ENCODE measurements at regions of chr11 and their contacts with region 1.

Region 1: DNA sequence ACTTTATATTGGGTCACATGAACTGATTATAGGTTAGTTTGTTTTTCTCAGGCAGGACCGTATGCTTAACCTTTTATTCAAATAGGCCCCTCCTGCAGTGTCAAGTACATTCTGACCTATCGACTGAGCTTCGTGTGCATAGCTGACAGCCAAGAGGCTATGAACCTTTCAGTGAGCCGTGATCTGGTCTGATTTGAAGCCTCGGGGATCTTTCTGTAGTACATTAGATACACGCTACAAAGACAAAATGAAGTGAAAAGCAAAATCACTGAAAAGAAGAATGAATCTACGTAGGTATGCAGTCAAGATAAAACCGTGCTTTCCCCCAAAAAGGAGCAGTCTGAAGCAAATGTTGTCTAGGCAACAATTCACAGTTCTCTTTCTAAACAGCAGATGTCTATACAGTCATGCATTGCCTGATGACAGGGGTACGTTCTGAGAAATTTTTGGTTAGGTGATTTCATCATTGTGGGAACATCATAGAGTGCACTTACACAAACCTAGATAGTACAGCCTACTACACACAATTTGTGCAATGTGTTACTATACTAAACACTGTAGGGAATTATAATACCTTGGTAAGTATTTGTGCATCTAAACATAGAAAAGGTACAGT is 18.1 kb downstream of the JHY start:
- DNase-seq: no peak
- ATAC-seq: peak; percentile 87
- H3K4me3 ChIP-seq: no peak overlapping the region
- H3K27ac ChIP-seq: no peak overlapping the region
- H3K4me1 ChIP-seq: no peaks in the 10 kb centered on the region
- H3K27me3 ChIP-seq: no peaks in the 10 kb centered on the region
- CTCF ChIP-seq: no peak
- EP300 ChIP-seq: no peak
- POLR2A ChIP-seq: no peak
- RAD21 ChIP-seq: peak; percentile 39; the same call in 1 of the 2 replicates

Region 2: DNA sequence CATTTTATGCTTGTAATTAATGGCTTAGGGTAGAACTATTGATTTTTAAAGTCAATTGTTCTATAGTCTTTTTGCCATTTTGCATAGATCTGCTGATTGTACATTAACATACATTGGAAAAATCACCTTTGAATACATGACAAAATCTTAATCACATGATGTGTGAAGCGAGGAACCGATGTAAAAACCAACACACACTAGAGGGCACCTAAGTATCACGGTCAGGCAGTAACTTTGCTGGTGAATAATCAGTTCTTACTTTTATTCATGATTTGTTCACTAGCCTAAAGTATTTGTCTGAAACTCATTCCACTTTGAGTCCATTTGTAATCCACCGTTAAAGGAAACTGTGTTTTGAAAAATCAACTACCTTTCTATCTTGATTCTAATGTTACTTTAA is 10.1 kb after region 1 on chr11:
- CTCF ChIA-PET with region 1: interaction called, 6 read pairs
- POLR2A ChIA-PET with region 1: no interaction called
- RAD21 ChIA-PET with region 1: no interaction called
- SMC1A ChIA-PET with region 1: interaction called, 11 read pairs
- in situ Hi-C with region 1: no loop called
- intact Hi-C with region 1: no loop called
- DNase-seq: no peak
- ATAC-seq: peak; percentile 70
- H3K4me3 ChIP-seq: no peak overlapping the region
- H3K27ac ChIP-seq: no peak overlapping the region
- H3K4me1 ChIP-seq: no peaks in the 10 kb centered on the region
- H3K27me3 ChIP-seq: no peaks in the 10 kb centered on the region
- CTCF ChIP-seq: peak; percentile 8 to 52 (median 14); a peak in 3 of 6 replicates
- EP300 ChIP-seq: no peak
- POLR2A ChIP-seq: no peak
- RAD21 ChIP-seq: peak; percentile 55

Region 3: GRCh38 chr11:123006860-123007542 is 106.3 kb after region 1 on chr11:
- CTCF ChIA-PET with region 1: no interaction called
- POLR2A ChIA-PET with region 1: no interaction called
- RAD21 ChIA-PET with region 1: no interaction called
- SMC1A ChIA-PET with region 1: no interaction called
- in situ Hi-C with region 1: no loop called
- intact Hi-C with region 1: no loop called
- DNase-seq: no peak
- ATAC-seq: peak; percentile 47; the same call in 2 of the 3 replicates
- H3K4me3 ChIP-seq: no peak overlapping the region
- H3K27ac ChIP-seq: no peak overlapping the region
- H3K4me1 ChIP-seq: no peaks in the 10 kb centered on the region
- H3K27me3 ChIP-seq: peaks cover 0 to 2% of the 10 kb centered on the region in 2 experiments; a peak in 1 of 4 replicates
- CTCF ChIP-seq: no peak
- EP300 ChIP-seq: no peak
- POLR2A ChIP-seq: no peak
- RAD21 ChIP-seq: no peak